ENCODE measurements at regions of chr9 and their contacts with region 1.

Region 1: GRCh38 chr9:130138171-130138653 is 34.0 kb upstream of the NCS1 start:
- DNase-seq: peak in 1 of 2 donors; percentile 44
- H3K4me3 ChIP-seq: no peak overlapping the region
- H3K27ac ChIP-seq: peak overlapping the region; percentile 41 to 45
- H3K4me1 ChIP-seq: no peaks in the 10 kb centered on the region
- H3K27me3 ChIP-seq: no peaks in the 10 kb centered on the region
- CTCF ChIP-seq: no peak
- POLR2A ChIP-seq: no peak

Region 2: GRCh38 chr9:129524582-129525270 is 613.5 kb before region 1 on chr9:
- intact Hi-C with region 1: no loop called
- DNase-seq: peak in 1 of 2 donors; percentile 57
- H3K4me3 ChIP-seq: no peak overlapping the region
- H3K27ac ChIP-seq: peak overlapping the region in 1 of 2 donors; percentile 38
- H3K4me1 ChIP-seq: peaks cover 0 to 6% of the 10 kb centered on the region in 2 donors
- H3K27me3 ChIP-seq: no peaks in the 10 kb centered on the region
- CTCF ChIP-seq: no peak
- POLR2A ChIP-seq: no peak

Region 3: GRCh38 chr9:130172161-130172857 is 34.1 kb after region 1 on chr9 and contains the start of gene NCS1:
- intact Hi-C with region 1: no loop called
- DNase-seq: peak; percentile 46 to 72
- H3K4me3 ChIP-seq: peak within 1 kb of the TSS; percentile 63 to 93 (median 68)
- H3K27ac ChIP-seq: peak within 1 kb of the TSS in 1 of 2 donors; percentile 5
- H3K4me1 ChIP-seq: no peaks in the 10 kb centered on the region
- H3K27me3 ChIP-seq: no peaks in the 10 kb centered on the region
- CTCF ChIP-seq: no peak
- POLR2A ChIP-seq: no peak
- total RNA-seq, gene NCS1: 3.2 to 3.9 (median 3.4) TPM

Region 4: GRCh38 chr9:130815242-130815808 is 677.1 kb after region 1 on chr9:
- intact Hi-C with region 1: loop called (anchors 5 kb)
- DNase-seq: no peak
- H3K4me3 ChIP-seq: no peak overlapping the region
- H3K27ac ChIP-seq: peak overlapping the region in 1 of 2 donors; percentile 19
- H3K4me1 ChIP-seq: no peaks in the 10 kb centered on the region
- H3K27me3 ChIP-seq: no peaks in the 10 kb centered on the region
- CTCF ChIP-seq: no peak
- POLR2A ChIP-seq: no peak